Astrocyte of the cerebellum (primary cell): ENCODE measurements at regions of chr3 and their contacts with region 1.

Region 1: GRCh38 chr3:128993461-128994173 is at the start of gene CFAP92:
- DNase-seq: no peak
- H3K4me3 ChIP-seq: peak within 1 kb of the TSS; percentile 37
- CTCF ChIP-seq: no peak

Region 2: GRCh38 chr3:128895843-128896697 is 97.5 kb before region 1 on chr3:
- in situ Hi-C with region 1: no loop called
- DNase-seq: no peak
- H3K4me3 ChIP-seq: no peak overlapping the region
- CTCF ChIP-seq: no peak

Region 3: GRCh38 chr3:128917291-128917690 is 76.3 kb before region 1 on chr3:
- in situ Hi-C with region 1: loop called (anchors 5 kb)
- DNase-seq: no peak
- H3K4me3 ChIP-seq: no peak overlapping the region
- CTCF ChIP-seq: peak; percentile 6

Region 4: GRCh38 chr3:129063841-129064482 is 70.3 kb after region 1 on chr3:
- in situ Hi-C with region 1: loop called (anchors 5 kb)
- DNase-seq: no peak
- H3K4me3 ChIP-seq: no peak overlapping the region
- CTCF ChIP-seq: no peak

Region 5: GRCh38 chr3:129087138-129087702 is 93.6 kb after region 1 on chr3:
- in situ Hi-C with region 1: loop called (anchors 10 kb)
- DNase-seq: no peak
- H3K4me3 ChIP-seq: no peak overlapping the region
- CTCF ChIP-seq: no peak